PC-3 (cell line): ENCODE measurements at regions of chr4 and their contacts with region 1.

Region 1: GRCh38 chr4:113958766-113959538 is 20.5 kb downstream of the ARSJ start:
- DNase-seq: peak; percentile 96
- ATAC-seq: peak; percentile 85
- H3K4me3 ChIP-seq: peak overlapping the region; percentile 55
- H3K27ac ChIP-seq: peak overlapping the region; percentile 93
- H3K4me1 ChIP-seq: peaks cover 67% of the 10 kb centered on the region
- H3K27me3 ChIP-seq: no peaks in the 10 kb centered on the region
- CTCF ChIP-seq: no peak

Region 2: GRCh38 chr4:113790478-113790877 is 168.5 kb before region 1 on chr4:
- CTCF ChIA-PET with region 1: no interaction called
- POLR2A ChIA-PET with region 1: no interaction called
- intact Hi-C with region 1: no loop called
- DNase-seq: no peak
- ATAC-seq: no peak
- H3K4me3 ChIP-seq: no peak overlapping the region
- H3K27ac ChIP-seq: no peak overlapping the region
- H3K4me1 ChIP-seq: peaks cover 3% of the 10 kb centered on the region; the same call in 1 of the 2 replicates
- H3K27me3 ChIP-seq: no peaks in the 10 kb centered on the region
- CTCF ChIP-seq: no peak

Region 3: GRCh38 chr4:113873508-113873907 is 85.4 kb before region 1 on chr4:
- CTCF ChIA-PET with region 1: no interaction called
- POLR2A ChIA-PET with region 1: interaction called, 17 read pairs
- intact Hi-C with region 1: no loop called
- DNase-seq: no peak
- ATAC-seq: no peak
- H3K4me3 ChIP-seq: no peak overlapping the region
- H3K27ac ChIP-seq: no peak overlapping the region
- H3K4me1 ChIP-seq: no peaks in the 10 kb centered on the region
- H3K27me3 ChIP-seq: no peaks in the 10 kb centered on the region
- CTCF ChIP-seq: no peak

Region 4: GRCh38 chr4:113979148-113979904 is 20.4 kb after region 1 on chr4 and contains the start of gene ARSJ:
- CTCF ChIA-PET with region 1: no interaction called
- POLR2A ChIA-PET with region 1: interaction called, 4 read pairs
- intact Hi-C with region 1: loop called (anchors 1 kb)
- DNase-seq: peak; percentile 64
- ATAC-seq: peak; percentile 48
- H3K4me3 ChIP-seq: peak within 1 kb of the TSS; percentile 74
- H3K27ac ChIP-seq: peak within 1 kb of the TSS; percentile 73
- H3K4me1 ChIP-seq: peaks cover 19% of the 10 kb centered on the region
- H3K27me3 ChIP-seq: no peaks in the 10 kb centered on the region
- CTCF ChIP-seq: no peak
- total RNA-seq, gene ARSJ: 16.4 and 19.1 TPM in 2 replicates

Region 5: DNA sequence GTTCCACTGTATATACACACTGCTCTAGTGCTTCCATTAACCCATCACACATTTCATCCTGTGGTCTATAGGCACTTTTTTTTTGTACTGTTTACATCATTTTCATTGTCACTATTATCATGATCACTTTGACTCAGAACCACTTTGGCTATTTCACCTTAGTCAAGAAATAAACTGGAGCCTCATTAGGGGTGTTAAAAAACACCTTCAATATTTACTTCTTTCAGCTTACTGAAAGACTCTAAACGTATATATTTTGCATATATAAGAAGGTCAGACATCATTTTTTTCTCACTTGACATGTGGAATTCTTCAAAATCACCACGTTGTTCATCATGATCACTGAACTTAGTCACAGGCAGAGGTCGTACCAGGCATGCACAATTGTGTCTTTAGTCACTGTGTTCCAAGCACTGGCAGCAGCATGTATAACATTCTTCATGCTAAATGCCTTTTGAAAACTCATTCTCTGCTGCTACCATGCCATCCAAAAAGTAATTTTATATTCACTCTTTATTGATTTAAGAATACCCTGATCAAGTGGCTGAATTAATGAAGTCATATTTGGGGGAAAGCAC is 249.7 kb after region 1 on chr4:
- CTCF ChIA-PET with region 1: no interaction called
- POLR2A ChIA-PET with region 1: no interaction called
- intact Hi-C with region 1: no loop called
- DNase-seq: peak; percentile 12
- ATAC-seq: no peak
- H3K4me3 ChIP-seq: no peak overlapping the region
- H3K27ac ChIP-seq: no peak overlapping the region
- H3K4me1 ChIP-seq: no peaks in the 10 kb centered on the region
- H3K27me3 ChIP-seq: no peaks in the 10 kb centered on the region
- CTCF ChIP-seq: peak; percentile 27; the same call in 1 of the 2 replicates

Region 6: DNA sequence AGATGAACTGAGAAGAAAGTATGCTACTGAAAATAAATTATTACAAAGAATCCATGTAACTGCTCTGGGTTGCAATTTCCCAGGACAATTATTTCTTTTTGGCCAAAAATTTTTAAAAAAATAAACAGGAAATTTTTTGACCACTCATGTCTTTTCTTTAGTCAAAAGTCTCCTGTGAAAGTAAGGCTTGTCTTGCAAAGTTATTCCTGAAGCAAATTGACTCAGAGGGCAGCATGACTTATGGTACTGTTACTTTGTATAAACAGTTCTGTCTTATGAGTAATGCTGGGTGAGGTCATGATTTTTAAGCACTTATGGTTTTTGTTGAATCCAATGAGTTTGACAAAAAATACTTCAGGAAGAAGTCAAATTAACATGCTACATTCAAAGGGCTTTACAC is 313.3 kb after region 1 on chr4:
- CTCF ChIA-PET with region 1: no interaction called
- POLR2A ChIA-PET with region 1: no interaction called
- intact Hi-C with region 1: loop called (anchors 5 kb)
- DNase-seq: peak; percentile 83
- ATAC-seq: peak; percentile 95
- H3K4me3 ChIP-seq: no peak overlapping the region
- H3K27ac ChIP-seq: peak overlapping the region; percentile 69
- H3K4me1 ChIP-seq: peaks cover 24% of the 10 kb centered on the region
- H3K27me3 ChIP-seq: no peaks in the 10 kb centered on the region
- CTCF ChIP-seq: no peak